Sigmoid colon (tissue), 7 donors: ENCODE measurements at regions of chr3 and their contacts with region 1.

Region 1: GRCh38 chr3:119873646-119874045 is 91.7 kb downstream of the NR1I2 start:
- DNase-seq: no peak
- H3K4me3 ChIP-seq: no peak overlapping the region
- H3K27ac ChIP-seq: no peak overlapping the region
- H3K4me1 ChIP-seq: no peaks in the 10 kb centered on the region
- H3K27me3 ChIP-seq: no peaks in the 10 kb centered on the region
- CTCF ChIP-seq: no peak
- EP300 ChIP-seq: no peak
- POLR2A ChIP-seq: no peak

Region 2: GRCh38 chr3:120357807-120358206 is 484.2 kb after region 1 on chr3:
- intact Hi-C with region 1: no loop called
- DNase-seq: no peak
- H3K4me3 ChIP-seq: no peak overlapping the region
- H3K27ac ChIP-seq: no peak overlapping the region
- H3K4me1 ChIP-seq: no peaks in the 10 kb centered on the region
- H3K27me3 ChIP-seq: no peaks in the 10 kb centered on the region
- CTCF ChIP-seq: no peak
- EP300 ChIP-seq: no peak
- POLR2A ChIP-seq: no peak

Region 3: GRCh38 chr3:121175116-121175515 is 1301.5 kb after region 1 on chr3:
- intact Hi-C with region 1: loop called (anchors 10 kb)
- DNase-seq: no peak
- H3K4me3 ChIP-seq: no peak overlapping the region
- H3K27ac ChIP-seq: no peak overlapping the region
- H3K4me1 ChIP-seq: peaks cover 0 to 9% (median 2%) of the 10 kb centered on the region in 4 donors
- H3K27me3 ChIP-seq: no peaks in the 10 kb centered on the region
- CTCF ChIP-seq: no peak
- EP300 ChIP-seq: no peak
- POLR2A ChIP-seq: no peak